AG04449 (cell line): ENCODE measurements at regions of chr6 and their contacts with region 1.

Region 1: DNA sequence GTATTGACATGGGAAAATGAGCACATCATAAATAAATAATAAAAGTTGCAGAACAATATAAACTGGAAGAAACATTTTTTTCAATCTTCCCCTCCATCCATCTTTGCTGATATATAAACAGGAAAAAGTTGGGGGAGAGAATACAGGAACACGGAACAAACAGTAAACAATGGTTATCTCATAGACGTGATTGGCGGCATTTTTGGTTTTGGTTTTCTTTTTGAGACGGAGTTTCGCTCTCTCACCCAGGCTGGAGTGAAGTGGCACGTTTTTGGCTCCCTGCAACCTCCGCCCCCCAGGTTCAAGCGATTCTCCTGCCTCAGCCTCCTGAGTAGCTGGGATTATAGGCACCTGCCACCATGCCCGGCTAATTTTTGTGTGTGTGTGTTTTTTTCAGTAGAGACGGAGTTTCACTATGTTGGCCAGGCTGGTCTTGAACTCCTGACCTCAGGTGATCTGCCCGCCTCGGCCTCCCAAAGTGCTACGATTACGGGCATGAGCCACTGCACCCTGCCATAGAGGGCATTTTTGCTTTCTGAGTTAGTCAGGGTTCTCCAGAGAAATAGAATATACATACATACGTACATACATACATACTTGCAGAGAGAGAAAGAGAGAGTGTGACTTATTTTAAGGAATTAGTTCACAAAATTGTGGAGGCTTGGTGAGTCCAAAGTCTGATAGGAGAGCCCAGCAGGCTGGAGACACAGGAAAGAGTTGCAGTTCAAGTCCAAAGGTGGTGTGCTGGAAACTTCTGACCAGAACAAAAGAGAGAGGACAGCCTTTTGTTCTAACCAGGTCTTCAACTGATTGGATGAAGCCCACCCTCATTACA is 22.6 kb downstream of the GNL1 start:
- DNase-seq: no peak
- H3K4me3 ChIP-seq: no peak overlapping the region
- CTCF ChIP-seq: no peak

Region 2: DNA sequence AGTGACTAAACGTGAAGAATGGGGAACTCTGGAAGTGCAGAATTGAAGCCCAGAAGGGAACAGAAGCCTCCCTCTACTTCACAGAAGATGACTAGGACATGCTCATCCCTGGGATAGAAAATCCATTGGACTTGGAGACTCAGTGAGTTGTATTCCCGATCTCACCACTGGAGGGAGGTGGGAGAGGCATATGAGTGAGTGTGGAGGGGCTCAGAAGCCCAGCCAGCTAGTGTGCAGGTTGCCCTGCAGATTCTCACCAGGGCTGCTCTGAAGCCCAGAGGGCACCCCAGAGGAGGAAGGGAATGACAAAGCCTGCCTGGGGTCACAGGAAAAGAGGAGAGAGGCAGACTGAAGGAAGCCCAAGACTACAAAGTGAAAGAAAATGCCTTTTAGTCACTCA is 86.4 kb before region 1 on chr6:
- CTCF ChIA-PET with region 1: no interaction called
- POLR2A ChIA-PET with region 1: no interaction called
- DNase-seq: no peak
- H3K4me3 ChIP-seq: no peak overlapping the region
- CTCF ChIP-seq: peak; percentile 36

Region 3: DNA sequence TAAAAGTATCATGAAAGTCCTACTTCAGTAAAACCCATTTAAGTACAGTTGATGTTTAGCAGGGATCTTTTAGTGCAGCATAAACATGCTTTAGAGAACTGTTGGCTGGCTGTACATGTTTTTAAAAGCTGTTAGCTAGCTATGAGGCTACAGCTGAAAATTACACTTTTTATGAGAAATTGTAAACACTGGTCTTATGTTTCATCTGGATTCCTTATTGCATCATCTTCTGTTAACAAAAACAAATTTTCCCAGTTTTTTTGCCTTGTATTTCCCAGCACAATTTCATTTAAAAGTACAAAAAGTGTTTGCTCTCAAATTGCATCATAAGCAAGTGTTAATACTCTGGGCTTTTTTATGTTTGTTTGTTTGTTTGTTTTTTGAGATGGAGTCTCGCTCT is 62.7 kb before region 1 on chr6:
- CTCF ChIA-PET with region 1: interaction called, 11 read pairs
- POLR2A ChIA-PET with region 1: no interaction called
- DNase-seq: no peak
- H3K4me3 ChIP-seq: no peak overlapping the region
- CTCF ChIP-seq: no peak

Region 4: GRCh38 chr6:30489081-30490025 is 44.3 kb before region 1 on chr6 and contains the start of gene HLA-E:
- CTCF ChIA-PET with region 1: interaction called, 788 read pairs
- POLR2A ChIA-PET with region 1: interaction called, 3 read pairs
- DNase-seq: peak; percentile 97
- H3K4me3 ChIP-seq: peak within 1 kb of the TSS; percentile 82
- CTCF ChIP-seq: no peak

Region 5: DNA sequence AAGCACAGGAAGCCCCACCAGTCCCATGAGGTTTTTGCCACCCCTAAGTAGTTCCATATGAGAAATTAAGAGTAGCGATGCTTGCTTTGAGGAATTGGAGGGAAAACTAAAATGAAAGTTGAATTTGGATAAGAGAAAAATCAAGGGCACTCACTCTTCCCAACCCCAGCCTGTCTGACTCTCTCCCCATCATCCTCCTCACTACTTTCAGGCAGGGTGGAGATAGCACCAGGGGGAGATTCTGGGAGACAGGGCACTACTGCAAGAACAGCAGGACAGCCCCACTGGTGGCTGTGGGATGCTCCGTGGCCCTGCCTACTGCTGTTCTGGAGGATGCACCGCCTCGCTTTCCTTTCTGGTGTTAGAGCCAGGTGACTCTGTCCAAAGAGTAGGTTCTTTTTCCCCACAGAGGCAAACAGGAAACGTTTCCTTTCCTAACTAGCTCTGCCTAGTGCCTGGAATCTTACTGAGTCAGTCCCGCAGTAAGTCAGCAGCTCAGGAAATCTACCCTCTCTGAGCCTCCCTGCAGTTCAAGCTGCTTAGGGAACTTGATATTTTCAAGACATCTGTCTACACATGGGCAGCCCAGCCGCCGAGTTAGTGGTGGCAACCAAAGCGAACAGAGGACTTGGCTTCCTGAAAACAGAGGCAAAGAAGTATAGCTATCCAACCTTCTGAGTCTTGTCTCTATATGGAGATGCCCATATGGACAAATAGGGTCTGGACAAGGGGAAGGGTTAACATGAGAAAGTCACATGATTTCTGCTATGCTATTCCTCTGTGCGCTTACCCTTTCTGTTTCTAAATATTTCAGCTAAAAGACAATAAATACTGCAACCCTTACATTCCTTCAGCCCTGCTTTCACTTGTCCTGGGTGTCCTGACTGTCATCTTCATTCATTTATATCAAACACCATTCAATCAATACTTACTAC is 33.0 kb before region 1 on chr6:
- CTCF ChIA-PET with region 1: interaction called, 43 read pairs
- POLR2A ChIA-PET with region 1: no interaction called
- DNase-seq: no peak
- H3K4me3 ChIP-seq: no peak overlapping the region
- CTCF ChIP-seq: no peak

Region 6: GRCh38 chr6:30508890-30509736 is 24.6 kb before region 1 on chr6:
- CTCF ChIA-PET with region 1: interaction called, 66 read pairs
- POLR2A ChIA-PET with region 1: no interaction called
- DNase-seq: no peak
- H3K4me3 ChIP-seq: no peak overlapping the region
- CTCF ChIP-seq: no peak

Region 7: DNA sequence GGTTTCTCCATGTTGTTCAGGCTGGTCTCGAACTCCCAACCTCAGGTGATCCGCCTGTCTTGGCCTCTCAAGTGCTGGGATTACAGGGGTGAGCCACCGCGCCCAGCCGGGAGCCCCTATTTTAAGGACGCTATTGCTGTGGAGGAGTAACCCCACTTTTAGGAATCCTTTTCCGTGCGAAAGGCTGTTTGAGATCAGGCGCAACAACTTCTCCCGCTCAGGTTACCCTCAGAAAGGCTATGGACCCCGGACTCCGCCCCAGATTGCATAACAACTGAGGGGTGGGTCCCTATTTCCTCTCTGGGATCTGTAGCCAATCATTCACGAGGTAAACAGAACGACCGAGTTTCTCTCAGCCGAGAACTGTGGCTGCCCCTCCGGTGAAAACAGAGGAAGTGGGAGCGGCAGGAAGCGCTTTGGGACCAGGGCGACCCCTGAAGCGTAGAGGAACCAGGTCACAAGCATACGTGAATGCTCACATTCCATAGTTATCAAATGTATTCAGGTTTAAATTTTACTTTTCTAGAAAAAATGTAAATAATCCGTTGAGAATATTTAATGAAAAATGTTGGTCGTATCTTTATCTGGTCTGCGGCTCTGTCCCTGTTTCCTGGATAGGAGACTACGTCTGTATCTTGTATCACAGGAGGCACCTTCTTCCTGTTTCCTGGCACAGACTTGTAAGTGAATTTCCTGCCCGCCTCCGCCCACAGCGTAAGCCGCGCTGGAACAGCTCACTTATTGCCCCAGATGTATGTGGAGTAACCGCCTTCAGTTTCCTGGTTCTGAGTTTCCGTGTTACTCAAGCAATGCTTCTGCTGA is 17.5 kb before region 1 on chr6:
- CTCF ChIA-PET with region 1: interaction called, 388 read pairs
- POLR2A ChIA-PET with region 1: interaction called, 3 read pairs
- DNase-seq: peak; percentile 59
- H3K4me3 ChIP-seq: peak overlapping the region; percentile 59
- CTCF ChIP-seq: no peak

Region 8: GRCh38 chr6:30556066-30556905 is 22.6 kb after region 1 on chr6 and contains the start of gene GNL1:
- CTCF ChIA-PET with region 1: interaction called, 269 read pairs
- POLR2A ChIA-PET with region 1: no interaction called
- DNase-seq: peak; percentile 47
- H3K4me3 ChIP-seq: peak within 1 kb of the TSS; percentile 100
- CTCF ChIP-seq: no peak